H1 (cell line): ENCODE measurements at regions of chr1 and their contacts with region 1.

Region 1: DNA sequence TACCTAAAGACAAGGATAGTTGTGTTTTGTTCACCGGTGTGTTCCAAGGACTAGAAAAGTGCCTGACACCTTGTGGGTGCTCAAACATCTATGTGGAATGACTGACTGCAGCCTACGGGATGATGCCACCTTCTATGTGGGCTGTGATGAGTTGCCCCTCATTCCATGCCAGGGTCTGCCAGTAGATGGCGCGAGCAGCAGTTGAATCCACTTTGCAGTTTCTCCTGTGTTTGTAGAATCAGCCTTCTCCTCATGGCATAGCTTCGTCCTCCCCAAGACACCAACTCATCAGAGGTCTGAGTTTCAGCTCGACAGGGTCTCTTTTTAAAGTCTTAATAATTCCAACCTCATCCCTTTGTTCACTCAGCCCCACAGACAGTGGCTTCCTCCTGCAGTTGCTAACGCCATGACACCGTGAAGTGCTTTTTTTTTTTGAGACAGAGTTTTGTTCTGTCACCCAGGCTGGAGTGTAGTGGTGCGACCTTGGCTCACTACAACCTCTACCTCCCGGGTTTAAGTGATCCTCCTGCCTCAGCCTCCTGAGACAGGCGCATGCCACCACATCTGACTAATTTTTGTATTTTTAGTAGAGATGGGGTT is 133.7 kb downstream of the CAPN8 start:
- DNase-seq: peak; percentile 50 to 90
- H3K4me3 ChIP-seq: no peak overlapping the region
- H3K27ac ChIP-seq: no peak overlapping the region
- H3K4me1 ChIP-seq: peaks cover 0 to 2% (median 0%) of the 10 kb centered on the region in 4 experiments; a peak in 1 of 7 replicates
- H3K27me3 ChIP-seq: no peaks in the 10 kb centered on the region
- CTCF ChIP-seq: peak; percentile 80 to 98 (median 93)
- EP300 ChIP-seq: no peak
- POLR2A ChIP-seq: no peak
- RAD21 ChIP-seq: peak; percentile 82 to 85

Region 2: GRCh38 chr1:223500560-223501425 is 31.0 kb before region 1 on chr1:
- CTCF ChIA-PET with region 1: interaction called, 13 read pairs
- POLR2A ChIA-PET with region 1: no interaction called
- DNase-seq: no peak
- H3K4me3 ChIP-seq: no peak overlapping the region
- H3K27ac ChIP-seq: no peak overlapping the region
- H3K4me1 ChIP-seq: peaks cover 0 to 2% (median 0%) of the 10 kb centered on the region in 4 experiments; a peak in 2 of 7 replicates
- H3K27me3 ChIP-seq: no peaks in the 10 kb centered on the region
- CTCF ChIP-seq: no peak
- EP300 ChIP-seq: no peak
- POLR2A ChIP-seq: no peak
- RAD21 ChIP-seq: no peak

Region 3: DNA sequence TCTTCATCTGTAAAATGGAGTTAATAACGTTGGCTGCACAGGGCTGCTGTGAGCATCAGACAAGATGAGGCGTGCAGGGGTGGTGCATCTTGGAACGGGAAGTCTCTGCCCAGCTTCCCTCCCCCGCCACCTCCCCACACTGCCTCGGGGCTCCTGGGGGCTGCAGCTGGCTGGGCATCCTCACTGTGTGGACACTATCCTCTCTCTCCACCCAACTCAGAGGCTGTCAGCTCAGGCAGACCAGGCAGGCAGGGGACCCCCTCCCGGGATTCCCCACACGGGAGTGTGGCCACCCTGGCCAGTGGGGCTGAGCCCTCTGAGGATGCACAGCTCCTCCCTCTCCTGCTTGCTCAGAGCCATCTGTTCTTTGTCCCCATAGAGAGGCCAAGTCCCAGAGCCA is 15.9 kb before region 1 on chr1:
- CTCF ChIA-PET with region 1: interaction called, 15 read pairs
- POLR2A ChIA-PET with region 1: no interaction called
- DNase-seq: no peak
- H3K4me3 ChIP-seq: no peak overlapping the region
- H3K27ac ChIP-seq: no peak overlapping the region
- H3K4me1 ChIP-seq: peaks cover 0 to 5% (median 2%) of the 10 kb centered on the region in 4 experiments; a peak in 2 of 7 replicates
- H3K27me3 ChIP-seq: no peaks in the 10 kb centered on the region
- CTCF ChIP-seq: no peak
- EP300 ChIP-seq: no peak
- POLR2A ChIP-seq: no peak
- RAD21 ChIP-seq: no peak

Region 4: DNA sequence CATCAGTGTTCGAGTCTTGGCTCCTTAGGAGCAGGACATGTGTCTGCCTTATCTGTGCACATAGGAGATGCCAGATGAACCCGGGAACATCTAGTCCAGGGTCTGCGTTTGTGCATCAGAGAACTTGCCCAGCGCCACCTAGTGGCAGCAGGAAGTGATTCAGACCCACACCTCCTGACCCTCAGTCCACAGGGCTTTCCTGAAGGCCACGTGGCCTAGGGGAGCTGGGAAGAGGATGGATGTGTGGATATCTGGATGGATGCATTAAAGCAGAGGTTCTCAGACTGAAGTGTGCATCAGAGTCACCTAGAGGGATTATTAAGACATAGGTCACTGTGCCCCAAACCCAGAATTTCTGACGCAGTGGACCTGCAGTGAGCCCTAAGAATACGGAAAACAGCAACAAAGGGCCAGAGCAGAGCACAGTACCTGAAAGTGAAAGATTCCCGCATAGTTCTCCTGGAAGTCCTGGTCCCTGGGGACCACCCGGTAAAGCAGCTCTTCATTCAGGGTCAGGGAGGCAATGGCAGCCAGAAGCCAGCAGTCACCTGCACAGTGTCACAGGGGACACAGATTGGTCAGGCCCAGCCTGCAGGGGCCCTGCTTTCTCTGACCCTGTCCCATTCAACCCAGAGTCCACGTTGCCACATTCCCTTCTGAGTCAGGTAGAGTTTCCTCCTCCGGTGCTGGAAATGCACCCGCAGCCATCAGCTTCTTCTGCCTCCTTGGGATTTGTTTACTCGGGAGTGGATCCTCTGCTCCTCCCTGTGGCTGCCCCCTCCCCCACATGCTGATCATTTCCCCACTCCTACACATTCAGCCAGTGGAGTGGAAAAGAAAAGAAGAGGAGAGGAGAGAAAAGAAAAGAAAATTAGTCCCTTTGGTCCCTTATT is 96.6 kb after region 1 on chr1:
- CTCF ChIA-PET with region 1: interaction called, 13 read pairs
- POLR2A ChIA-PET with region 1: no interaction called
- DNase-seq: peak; percentile 10 to 76
- H3K4me3 ChIP-seq: no peak overlapping the region
- H3K27ac ChIP-seq: no peak overlapping the region
- H3K4me1 ChIP-seq: 0 out of 7 replicates have a peak, but pooled peaks cover 0 to 4% (median 0%) of the 10 kb centered on the region in 4 experiments
- H3K27me3 ChIP-seq: no peaks in the 10 kb centered on the region
- CTCF ChIP-seq: peak; percentile 71 to 91 (median 87)
- EP300 ChIP-seq: no peak
- POLR2A ChIP-seq: no peak
- RAD21 ChIP-seq: peak; percentile 51 to 62

Region 5: GRCh38 chr1:223748773-223749733 is 217.2 kb after region 1 on chr1:
- CTCF ChIA-PET with region 1: no interaction called
- POLR2A ChIA-PET with region 1: no interaction called
- DNase-seq: peak in 1 of 2 experiments; percentile 76
- H3K4me3 ChIP-seq: peak overlapping the region; percentile 43 to 77 (median 70)
- H3K27ac ChIP-seq: no peak overlapping the region
- H3K4me1 ChIP-seq: peaks cover 0 to 16% (median 9%) of the 10 kb centered on the region in 4 experiments; a peak in 6 of 7 replicates
- H3K27me3 ChIP-seq: peaks cover 3 to 21% (median 17%) of the 10 kb centered on the region in 4 experiments
- CTCF ChIP-seq: peak; percentile 70 to 85 (median 74)
- EP300 ChIP-seq: no peak
- POLR2A ChIP-seq: no peak
- RAD21 ChIP-seq: peak; percentile 64 to 78